ENCODE measurements at regions of chr1 and their contacts with region 1.

Region 1: DNA sequence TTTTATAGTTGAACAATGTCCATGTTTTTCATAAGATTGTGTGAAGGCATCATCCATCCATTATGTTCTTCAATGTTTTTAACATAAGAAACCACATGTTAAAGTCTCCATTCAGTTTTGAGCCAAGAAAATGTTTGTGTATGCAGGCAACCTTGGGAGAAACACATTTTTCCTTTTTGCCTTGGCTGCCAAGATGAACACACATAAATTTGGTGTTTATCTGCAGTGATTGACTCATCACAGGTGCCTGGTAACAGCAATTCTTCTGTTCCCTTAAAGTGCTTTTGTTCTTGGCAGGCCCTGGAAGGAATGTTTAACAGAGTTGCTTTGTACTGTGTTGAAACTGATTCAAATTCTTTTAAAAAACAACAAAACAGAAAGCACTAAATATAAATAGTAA is 709.9 kb upstream of the ADGRL4 start:
- DNase-seq: peak; percentile 69
- ATAC-seq: peak; percentile 92
- H3K4me3 ChIP-seq: no peak overlapping the region
- H3K27ac ChIP-seq: no peak overlapping the region
- H3K4me1 ChIP-seq: peaks cover 14% of the 10 kb centered on the region
- H3K27me3 ChIP-seq: no peaks in the 10 kb centered on the region
- CTCF ChIP-seq: no peak

Region 2: GRCh38 chr1:79745936-79746335 is 29.5 kb after region 1 on chr1:
- CTCF ChIA-PET with region 1: no interaction called
- POLR2A ChIA-PET with region 1: no interaction called
- intact Hi-C with region 1: loop called (anchors 1 kb)
- DNase-seq: peak; percentile 92
- ATAC-seq: peak; percentile 99
- H3K4me3 ChIP-seq: no peak overlapping the region
- H3K27ac ChIP-seq: no peak overlapping the region
- H3K4me1 ChIP-seq: peaks cover 11% of the 10 kb centered on the region
- H3K27me3 ChIP-seq: no peaks in the 10 kb centered on the region
- CTCF ChIP-seq: no peak

Region 3: GRCh38 chr1:79811173-79811572 is 94.7 kb after region 1 on chr1:
- CTCF ChIA-PET with region 1: no interaction called
- POLR2A ChIA-PET with region 1: no interaction called
- intact Hi-C with region 1: loop called (anchors 5 kb)
- DNase-seq: peak; percentile 68
- ATAC-seq: peak; percentile 89
- H3K4me3 ChIP-seq: no peak overlapping the region
- H3K27ac ChIP-seq: peak overlapping the region; percentile 58
- H3K4me1 ChIP-seq: peaks cover 11% of the 10 kb centered on the region
- H3K27me3 ChIP-seq: no peaks in the 10 kb centered on the region
- CTCF ChIP-seq: no peak